ENCODE measurements at regions of chr3 and their contacts with region 1.

Region 1: DNA sequence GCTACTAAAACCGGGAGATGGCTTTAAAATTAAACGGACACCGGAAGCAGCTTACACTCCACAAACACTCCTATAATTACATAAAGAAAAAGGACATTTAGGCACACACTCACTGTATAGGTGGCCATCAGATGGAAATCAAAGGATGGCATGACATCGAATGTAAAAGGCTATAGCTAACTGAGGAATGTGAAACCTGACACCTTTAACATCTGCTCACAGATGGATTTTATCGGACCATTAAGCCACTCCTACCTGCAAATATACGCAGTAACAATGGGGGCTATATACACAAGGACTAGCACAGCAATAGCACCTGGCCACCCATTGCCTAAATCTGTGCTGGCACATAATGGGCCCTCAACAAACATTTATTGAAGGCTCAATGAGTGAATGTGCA is 14.5 kb upstream of the RBSN start:
- DNase-seq: no peak
- ATAC-seq: no peak

Region 2: DNA sequence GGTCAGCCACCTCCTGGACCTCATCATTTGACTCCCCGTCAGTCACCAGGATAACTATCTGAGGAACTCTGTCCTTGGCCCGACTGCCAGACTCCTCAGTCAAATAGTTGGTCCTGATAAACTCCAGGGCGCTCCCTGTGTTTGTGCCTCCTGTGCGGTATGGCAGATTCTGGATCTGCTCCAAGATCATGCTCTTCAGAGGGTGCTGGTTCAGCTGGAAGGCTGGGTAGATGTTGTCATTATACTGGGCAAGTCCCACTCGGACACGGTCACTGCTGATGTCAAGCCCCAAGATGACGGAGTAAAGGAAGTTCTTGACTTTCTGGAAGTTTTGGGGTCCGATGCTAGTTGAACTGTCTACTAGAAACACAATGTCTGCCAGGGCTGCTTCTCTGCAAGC is 61.5 kb after region 1 on chr3:
- intact Hi-C with region 1: loop called in 1 of 2 experiments (anchors 5 kb)
- DNase-seq: peak; percentile 18
- ATAC-seq: peak; percentile 85 to 88

Region 3: GRCh38 chr3:15205934-15206661 is 92.6 kb after region 1 on chr3 and contains the start of gene CAPN7:
- intact Hi-C with region 1: loop called (anchors 10 kb)
- DNase-seq: peak; percentile 97
- ATAC-seq: peak; percentile 98 to 99
- total RNA-seq, gene CAPN7: 28.4 to 28.9 TPM

Region 4: GRCh38 chr3:15377961-15378791 is 264.7 kb after region 1 on chr3:
- intact Hi-C with region 1: loop called in 1 of 2 experiments (anchors 10 kb)
- DNase-seq: peak; percentile 95
- ATAC-seq: peak; percentile 97 to 98

Region 5: DNA sequence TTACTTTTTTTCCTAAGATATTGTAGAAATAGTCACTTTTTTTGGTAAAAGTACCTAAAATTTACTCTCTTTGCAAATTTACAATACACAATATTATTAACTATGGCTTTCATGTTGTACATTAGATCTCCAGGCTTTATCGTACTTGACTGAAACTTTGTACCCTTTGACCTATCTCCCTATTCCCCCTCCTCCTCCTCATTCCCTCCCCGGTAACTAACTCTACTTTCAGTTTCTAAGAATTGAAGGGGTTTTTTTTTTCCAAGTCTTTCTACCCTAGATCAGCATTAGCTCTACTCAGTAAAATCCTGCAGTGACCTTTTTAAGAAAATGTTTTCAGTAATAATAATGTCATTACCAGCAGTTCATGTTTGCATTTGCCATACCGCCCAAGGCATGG is 477.8 kb after region 1 on chr3:
- intact Hi-C with region 1: no loop called
- DNase-seq: no peak
- ATAC-seq: no peak

Measured in left cardiac atrium (tissue), 4 donors.